ENCODE measurements at regions of chr17 and their contacts with region 1.

Region 1: GRCh38 chr17:78307872-78308638 is 51.8 kb downstream of the SOCS3 start:
- DNase-seq: peak; percentile 56 to 70
- H3K4me3 ChIP-seq: no peak overlapping the region
- H3K27ac ChIP-seq: peak overlapping the region; percentile 72
- H3K4me1 ChIP-seq: peaks cover 19% of the 10 kb centered on the region
- H3K27me3 ChIP-seq: no peaks in the 10 kb centered on the region
- CTCF ChIP-seq: no peak

Region 2: DNA sequence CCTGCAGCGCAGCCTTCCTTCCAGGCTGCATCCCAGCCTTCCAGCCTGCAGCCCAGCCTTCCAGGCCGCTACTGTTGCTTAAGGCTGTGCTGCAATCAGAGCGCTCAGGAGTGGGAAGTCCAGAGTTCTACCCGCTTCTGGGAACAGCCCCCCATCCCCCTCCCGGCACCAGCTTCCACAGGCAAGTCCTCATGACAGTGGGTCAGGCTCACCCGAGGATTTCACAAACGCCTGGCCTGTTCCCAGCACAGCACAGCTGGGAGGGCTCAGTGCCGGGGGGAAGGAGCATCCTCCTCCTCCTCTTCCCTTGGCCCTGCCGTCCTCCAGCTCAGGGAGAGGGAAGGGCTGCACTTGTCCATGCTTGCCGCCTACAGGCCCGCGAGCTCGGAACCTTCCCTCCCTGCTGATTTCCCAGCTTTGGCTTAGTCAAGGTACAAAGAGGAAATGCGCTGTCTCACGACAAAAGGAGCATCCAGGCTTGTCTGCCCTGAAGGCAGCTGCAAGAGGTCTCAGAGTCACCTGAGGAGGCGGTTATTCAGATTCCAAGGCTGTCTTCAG is 43.5 kb after region 1 on chr17:
- CTCF ChIA-PET with region 1: no interaction called
- POLR2A ChIA-PET with region 1: interaction called, 21 read pairs
- intact Hi-C with region 1: no loop called
- DNase-seq: no peak
- H3K4me3 ChIP-seq: no peak overlapping the region
- H3K27ac ChIP-seq: no peak overlapping the region
- H3K4me1 ChIP-seq: peaks cover 22% of the 10 kb centered on the region
- H3K27me3 ChIP-seq: no peaks in the 10 kb centered on the region
- CTCF ChIP-seq: no peak

Region 3: GRCh38 chr17:78387977-78388941 is 80.2 kb after region 1 on chr17:
- CTCF ChIA-PET with region 1: no interaction called
- POLR2A ChIA-PET with region 1: interaction called, 16 read pairs
- intact Hi-C with region 1: no loop called
- DNase-seq: no peak
- H3K4me3 ChIP-seq: no peak overlapping the region
- H3K27ac ChIP-seq: no peak overlapping the region
- H3K4me1 ChIP-seq: peaks cover 21% of the 10 kb centered on the region
- H3K27me3 ChIP-seq: no peaks in the 10 kb centered on the region
- CTCF ChIP-seq: no peak

Region 4: GRCh38 chr17:78826421-78826820 is 518.4 kb after region 1 on chr17:
- CTCF ChIA-PET with region 1: no interaction called
- POLR2A ChIA-PET with region 1: no interaction called
- intact Hi-C with region 1: no loop called
- DNase-seq: peak in 1 of 2 experiments; percentile 37
- H3K4me3 ChIP-seq: no peak overlapping the region
- H3K27ac ChIP-seq: no peak overlapping the region
- H3K4me1 ChIP-seq: no peaks in the 10 kb centered on the region
- H3K27me3 ChIP-seq: no peaks in the 10 kb centered on the region
- CTCF ChIP-seq: no peak